WTC11 (cell line): ENCODE measurements at regions of chr2 and their contacts with region 1.

Region 1: DNA sequence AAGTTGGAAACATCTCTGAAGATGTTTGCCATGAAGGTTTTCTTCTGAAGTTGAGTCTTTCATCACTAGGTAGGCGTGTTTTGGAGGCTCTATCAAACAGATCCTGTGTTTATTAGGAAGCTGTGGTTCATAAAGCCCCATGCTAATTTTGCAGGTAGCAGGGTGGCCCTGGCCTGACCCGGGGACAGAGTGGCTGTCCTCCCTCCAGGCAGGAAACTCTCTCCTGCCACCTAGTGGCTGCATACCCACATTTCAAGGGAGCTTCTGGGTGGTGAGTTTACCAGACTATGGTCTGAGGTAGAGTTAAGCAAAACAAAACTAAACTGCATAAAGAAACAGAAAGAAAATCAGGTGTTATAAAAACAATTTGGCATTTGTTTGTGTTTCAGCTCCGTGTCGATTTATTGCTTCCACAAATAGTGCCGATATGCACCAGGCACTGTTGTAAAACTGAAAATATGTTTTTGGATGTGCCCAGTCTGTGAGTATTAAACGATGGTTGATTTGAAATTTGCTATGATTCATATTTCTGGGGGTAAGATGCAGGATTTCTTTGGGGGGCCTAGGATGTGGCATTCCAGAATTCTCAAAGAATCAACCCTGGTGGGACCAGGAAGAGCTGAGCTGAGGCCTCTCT is 26.0 kb upstream of the IL37 start:
- DNase-seq: peak; percentile 89
- ATAC-seq: peak; percentile 98
- H3K4me3 Mint-ChIP-seq: no peak overlapping the region
- H3K27ac Mint-ChIP-seq: no peak overlapping the region
- H3K4me1 Mint-ChIP-seq: peaks cover 9% of the 10 kb centered on the region
- H3K27me3 Mint-ChIP-seq: no peaks in the 10 kb centered on the region; the same call in none of the 2 replicates
- CTCF ChIP-seq: peak; percentile 89

Region 2: DNA sequence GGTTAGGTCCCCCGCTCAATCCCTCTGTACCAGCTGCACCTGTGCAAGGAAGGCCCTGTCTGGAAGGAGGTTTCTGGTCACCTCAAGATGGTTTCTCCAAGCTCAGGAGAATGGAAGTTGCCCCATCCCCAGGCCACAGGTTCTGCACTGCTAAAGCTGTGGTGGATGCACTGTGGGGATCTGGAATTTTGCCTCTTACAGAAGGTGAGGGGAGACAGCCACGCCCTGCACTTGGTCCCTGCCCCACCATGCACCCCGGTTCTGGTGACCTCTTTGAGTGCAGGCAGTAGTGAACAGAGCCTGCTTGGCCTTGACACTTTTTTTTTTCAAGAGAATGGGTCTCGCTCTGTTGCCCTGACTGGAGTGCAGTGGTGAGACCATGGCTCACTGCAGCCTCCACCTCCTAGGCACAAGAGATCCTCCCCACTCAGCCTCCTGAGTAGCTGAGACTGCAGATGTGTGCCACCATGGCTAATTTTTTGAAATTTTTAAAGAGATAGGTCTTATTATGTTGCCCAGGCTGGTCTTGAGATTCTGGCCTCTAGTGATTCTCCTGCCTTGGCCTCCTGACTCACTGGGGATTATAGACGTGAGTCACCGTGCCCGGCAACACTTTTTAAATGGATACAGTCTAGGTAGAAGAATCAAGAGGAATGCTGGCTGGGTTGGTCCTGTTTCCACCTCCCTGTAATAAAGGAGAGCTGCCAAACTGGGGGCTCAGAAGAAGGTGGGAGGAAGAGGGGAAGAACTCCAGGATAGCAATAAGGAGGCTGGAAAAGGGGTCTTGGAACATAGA is 170.0 kb before region 1 on chr2:
- CTCF ChIA-PET with region 1: no interaction called
- POLR2A ChIA-PET with region 1: no interaction called
- DNase-seq: no peak
- ATAC-seq: no peak
- H3K4me3 Mint-ChIP-seq: no peak overlapping the region
- H3K27ac Mint-ChIP-seq: no peak overlapping the region
- H3K4me1 Mint-ChIP-seq: peaks cover 4% of the 10 kb centered on the region; the same call in 1 of the 2 replicates
- H3K27me3 Mint-ChIP-seq: 0 out of 2 replicates have a peak, but pooled peaks cover 2% of the 10 kb centered on the region
- CTCF ChIP-seq: no peak

Region 3: GRCh38 chr2:112749755-112750559 is 135.0 kb before region 1 on chr2:
- CTCF ChIA-PET with region 1: interaction called, 72 read pairs
- POLR2A ChIA-PET with region 1: no interaction called
- DNase-seq: peak; percentile 85
- ATAC-seq: peak; percentile 89
- H3K4me3 Mint-ChIP-seq: no peak overlapping the region
- H3K27ac Mint-ChIP-seq: peak overlapping the region; percentile 19; the same call in 1 of the 2 replicates
- H3K4me1 Mint-ChIP-seq: no peaks in the 10 kb centered on the region
- H3K27me3 Mint-ChIP-seq: no peaks in the 10 kb centered on the region
- CTCF ChIP-seq: peak; percentile 76

Region 4: GRCh38 chr2:112764071-112765044 is 120.6 kb before region 1 on chr2 and contains the start of gene CKAP2L:
- CTCF ChIA-PET with region 1: interaction called, 17 read pairs
- POLR2A ChIA-PET with region 1: no interaction called
- DNase-seq: peak; percentile 95
- ATAC-seq: peak; percentile 97
- H3K4me3 Mint-ChIP-seq: peak within 1 kb of the TSS; percentile 97
- H3K27ac Mint-ChIP-seq: peak within 1 kb of the TSS; percentile 82
- H3K4me1 Mint-ChIP-seq: peaks cover 23% of the 10 kb centered on the region
- H3K27me3 Mint-ChIP-seq: no peaks in the 10 kb centered on the region
- CTCF ChIP-seq: no peak
- total RNA-seq, gene CKAP2L: 17.7 to 25.6 TPM (median 17.9 TPM) in 3 replicates

Region 5: DNA sequence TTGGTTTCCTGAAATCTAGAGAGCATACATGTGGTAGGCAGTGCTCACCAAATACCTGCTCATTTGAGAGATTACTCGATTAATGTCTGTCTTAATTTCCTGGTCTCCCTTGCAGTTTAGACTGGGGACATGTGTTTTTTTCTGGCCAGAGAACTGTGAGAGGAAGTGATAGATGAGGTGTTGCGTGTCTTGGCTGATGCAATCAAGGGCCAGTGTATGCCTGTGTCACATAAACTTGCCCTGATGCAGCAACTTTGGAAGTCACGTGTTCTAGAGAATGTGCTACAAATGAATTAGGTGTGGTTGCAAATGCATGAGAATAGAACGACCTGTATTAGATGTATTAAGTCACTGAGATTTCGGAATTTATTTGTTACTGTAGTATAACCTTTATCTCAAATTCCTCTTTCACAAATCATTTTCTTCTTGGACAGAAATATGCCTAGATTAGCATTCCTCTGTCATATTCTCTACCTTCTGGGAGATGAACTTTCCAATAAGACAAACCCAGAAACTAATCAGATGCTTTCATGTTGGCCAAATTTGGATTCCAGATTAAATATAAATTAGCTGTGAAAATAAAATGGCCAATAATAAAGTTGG is 90.8 kb before region 1 on chr2:
- CTCF ChIA-PET with region 1: no interaction called
- POLR2A ChIA-PET with region 1: no interaction called
- DNase-seq: no peak
- ATAC-seq: no peak
- H3K4me3 Mint-ChIP-seq: no peak overlapping the region
- H3K27ac Mint-ChIP-seq: peak overlapping the region; percentile 5; the same call in 1 of the 2 replicates
- H3K4me1 Mint-ChIP-seq: peaks cover 56% of the 10 kb centered on the region
- H3K27me3 Mint-ChIP-seq: no peaks in the 10 kb centered on the region; the same call in 1 of the 2 replicates
- CTCF ChIP-seq: no peak

Region 6: DNA sequence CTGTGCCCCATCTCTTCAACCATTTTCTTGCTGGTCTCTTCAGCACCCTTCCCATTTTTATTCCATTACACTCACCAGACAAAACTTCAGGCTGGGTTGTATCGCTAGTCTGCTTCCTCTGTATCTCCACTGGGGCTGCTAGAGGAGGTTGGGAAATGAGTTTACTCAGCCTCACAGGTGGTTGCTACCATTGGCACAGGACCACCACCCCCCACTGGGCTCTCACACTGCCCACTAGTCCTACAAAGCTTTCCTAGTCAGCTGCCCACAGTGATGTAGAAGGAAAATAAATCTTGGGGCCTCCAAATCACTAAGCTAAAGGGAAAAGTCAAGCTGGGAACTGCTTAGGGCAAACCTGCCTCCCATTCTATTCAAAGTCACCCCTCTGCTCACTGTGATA is 36.2 kb before region 1 on chr2:
- CTCF ChIA-PET with region 1: interaction called, 21 read pairs
- POLR2A ChIA-PET with region 1: no interaction called
- DNase-seq: no peak
- ATAC-seq: peak; percentile 43
- H3K4me3 Mint-ChIP-seq: no peak overlapping the region
- H3K27ac Mint-ChIP-seq: peak overlapping the region; percentile 75
- H3K4me1 Mint-ChIP-seq: peaks cover 47% of the 10 kb centered on the region
- H3K27me3 Mint-ChIP-seq: peaks cover 6% of the 10 kb centered on the region
- CTCF ChIP-seq: no peak

Region 7: GRCh38 chr2:112870841-112871835 is 13.8 kb before region 1 on chr2:
- CTCF ChIA-PET with region 1: interaction called, 13 read pairs
- POLR2A ChIA-PET with region 1: no interaction called
- DNase-seq: no peak
- ATAC-seq: peak; percentile 38
- H3K4me3 Mint-ChIP-seq: no peak overlapping the region
- H3K27ac Mint-ChIP-seq: peak overlapping the region; percentile 30
- H3K4me1 Mint-ChIP-seq: peaks cover 24% of the 10 kb centered on the region
- H3K27me3 Mint-ChIP-seq: peaks cover 7% of the 10 kb centered on the region; the same call in 1 of the 2 replicates
- CTCF ChIP-seq: no peak

Region 8: GRCh38 chr2:112904883-112905282 is 19.9 kb after region 1 on chr2:
- CTCF ChIA-PET with region 1: interaction called, 12 read pairs
- POLR2A ChIA-PET with region 1: no interaction called
- DNase-seq: no peak
- ATAC-seq: no peak
- H3K4me3 Mint-ChIP-seq: no peak overlapping the region
- H3K27ac Mint-ChIP-seq: no peak overlapping the region
- H3K4me1 Mint-ChIP-seq: no peaks in the 10 kb centered on the region
- H3K27me3 Mint-ChIP-seq: peaks cover 19% of the 10 kb centered on the region
- CTCF ChIP-seq: no peak

Region 9: GRCh38 chr2:113148606-113149560 is 263.9 kb after region 1 on chr2:
- CTCF ChIA-PET with region 1: no interaction called
- POLR2A ChIA-PET with region 1: no interaction called
- DNase-seq: no peak
- ATAC-seq: no peak
- H3K4me3 Mint-ChIP-seq: no peak overlapping the region
- H3K27ac Mint-ChIP-seq: no peak overlapping the region
- H3K4me1 Mint-ChIP-seq: no peaks in the 10 kb centered on the region
- H3K27me3 Mint-ChIP-seq: peaks cover 5% of the 10 kb centered on the region; the same call in 1 of the 2 replicates
- CTCF ChIP-seq: no peak